Esophagus squamous epithelium (tissue), 5 donors: ENCODE measurements at regions of chr9 and their contacts with region 1.

Region 1: GRCh38 chr9:4382722-4383317 is 83.0 kb upstream of the GLIS3 start:
- DNase-seq: no peak
- H3K4me3 ChIP-seq: no peak overlapping the region
- H3K27ac ChIP-seq: no peak overlapping the region
- H3K4me1 ChIP-seq: no peaks in the 10 kb centered on the region
- H3K27me3 ChIP-seq: no peaks in the 10 kb centered on the region
- CTCF ChIP-seq: peak in 5 of 6 experiments; percentile 38 to 67 (median 52)
- POLR2A ChIP-seq: no peak

Region 2: DNA sequence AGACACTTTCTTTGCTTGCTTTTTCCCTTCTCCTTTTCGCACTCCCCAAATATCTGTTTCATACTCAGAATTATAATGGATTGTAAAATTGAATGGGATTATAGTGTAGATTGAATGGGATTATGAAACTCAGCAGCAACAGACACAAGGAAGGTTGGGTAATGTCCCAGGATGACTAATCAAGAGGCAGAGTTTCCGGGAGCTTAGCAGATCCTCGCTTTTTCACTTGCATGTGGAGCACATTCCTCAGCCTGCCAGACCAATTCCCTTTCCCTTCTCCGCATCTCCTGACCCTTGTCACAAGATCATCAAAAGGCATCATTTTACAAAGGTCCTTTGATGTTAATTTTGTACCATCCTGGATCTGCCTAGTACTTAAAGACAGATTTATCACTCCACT is 52.4 kb after region 1 on chr9:
- intact Hi-C with region 1: no loop called
- DNase-seq: no peak
- H3K4me3 ChIP-seq: no peak overlapping the region
- H3K27ac ChIP-seq: no peak overlapping the region
- H3K4me1 ChIP-seq: no peaks in the 10 kb centered on the region
- H3K27me3 ChIP-seq: no peaks in the 10 kb centered on the region
- CTCF ChIP-seq: no peak
- POLR2A ChIP-seq: no peak

Region 3: DNA sequence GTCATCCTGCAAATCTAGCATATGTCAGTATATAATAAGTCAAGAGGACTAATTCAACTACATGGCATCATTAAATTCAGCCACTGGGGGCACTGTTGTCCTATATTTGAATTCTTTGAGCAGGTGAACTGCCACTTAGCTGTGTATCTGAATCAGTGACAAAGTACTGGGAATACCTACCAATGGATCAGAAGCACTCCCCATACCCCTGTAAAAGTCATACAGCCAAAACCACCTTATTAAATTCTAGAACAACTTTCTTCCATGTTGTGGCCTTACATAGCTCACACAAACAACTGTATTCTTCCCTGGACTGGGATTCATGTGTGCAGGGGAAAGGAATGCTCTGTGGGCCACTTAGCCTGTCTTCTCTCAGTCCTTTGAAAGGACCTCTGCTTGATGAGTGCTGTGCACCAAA is 221.9 kb after region 1 on chr9:
- intact Hi-C with region 1: no loop called
- DNase-seq: no peak
- H3K4me3 ChIP-seq: no peak overlapping the region
- H3K27ac ChIP-seq: no peak overlapping the region
- H3K4me1 ChIP-seq: peaks cover 0 to 6% (median 0%) of the 10 kb centered on the region in 3 donors
- H3K27me3 ChIP-seq: no peaks in the 10 kb centered on the region
- CTCF ChIP-seq: peak; percentile 39 to 80 (median 66)
- POLR2A ChIP-seq: no peak

Region 4: GRCh38 chr9:4630836-4631235 is 248.0 kb after region 1 on chr9:
- intact Hi-C with region 1: loop called (anchors 10 kb)
- DNase-seq: no peak
- H3K4me3 ChIP-seq: no peak overlapping the region
- H3K27ac ChIP-seq: no peak overlapping the region
- H3K4me1 ChIP-seq: no peaks in the 10 kb centered on the region
- H3K27me3 ChIP-seq: no peaks in the 10 kb centered on the region
- CTCF ChIP-seq: no peak
- POLR2A ChIP-seq: no peak